Posterior vena cava (tissue), 2 donors: ENCODE measurements at regions of chr16 and their contacts with region 1.

Region 1: DNA sequence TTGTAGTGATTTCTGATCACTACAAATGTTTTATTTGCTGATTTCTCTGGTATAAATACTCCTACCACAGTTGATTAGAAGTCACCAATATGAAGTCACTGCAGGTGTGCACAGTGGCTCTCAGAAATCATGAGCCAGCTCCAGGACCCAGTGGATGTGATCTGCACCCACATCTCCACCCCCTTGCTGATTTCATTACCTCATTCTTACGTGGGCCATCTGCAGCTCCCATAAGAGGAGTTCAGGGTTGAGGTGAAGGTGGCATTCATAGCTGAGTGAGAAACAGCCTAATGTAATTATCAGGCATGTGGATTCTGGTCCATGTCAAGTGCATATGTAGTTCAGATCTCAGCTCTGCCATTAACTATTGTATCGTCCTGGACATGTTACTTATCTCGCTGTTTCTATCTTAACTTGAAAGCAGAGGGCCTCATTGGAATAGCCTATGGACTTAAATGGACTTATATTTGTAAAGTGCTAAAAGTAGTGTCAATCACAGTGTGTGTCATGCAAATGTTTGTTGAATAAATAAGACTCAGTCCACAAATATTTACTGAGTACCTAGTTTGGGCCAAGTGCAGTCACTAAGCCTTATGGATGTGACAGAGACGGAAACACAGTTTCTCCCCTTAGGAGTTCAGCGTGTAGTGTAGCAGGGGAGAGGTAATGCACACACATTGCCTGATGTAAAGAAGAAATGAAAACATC is 40.7 kb upstream of the ZKSCAN2 start:
- DNase-seq: no peak

Region 2: GRCh38 chr16:25633549-25633948 is 335.2 kb after region 1 on chr16:
- intact Hi-C with region 1: no loop called
- DNase-seq: no peak

Region 3: GRCh38 chr16:26505496-26505895 is 1207.2 kb after region 1 on chr16:
- intact Hi-C with region 1: loop called in 1 of 2 experiments (anchors 5 kb)
- DNase-seq: no peak